ENCODE measurements at regions of chr12 and their contacts with region 1.

Region 1: DNA sequence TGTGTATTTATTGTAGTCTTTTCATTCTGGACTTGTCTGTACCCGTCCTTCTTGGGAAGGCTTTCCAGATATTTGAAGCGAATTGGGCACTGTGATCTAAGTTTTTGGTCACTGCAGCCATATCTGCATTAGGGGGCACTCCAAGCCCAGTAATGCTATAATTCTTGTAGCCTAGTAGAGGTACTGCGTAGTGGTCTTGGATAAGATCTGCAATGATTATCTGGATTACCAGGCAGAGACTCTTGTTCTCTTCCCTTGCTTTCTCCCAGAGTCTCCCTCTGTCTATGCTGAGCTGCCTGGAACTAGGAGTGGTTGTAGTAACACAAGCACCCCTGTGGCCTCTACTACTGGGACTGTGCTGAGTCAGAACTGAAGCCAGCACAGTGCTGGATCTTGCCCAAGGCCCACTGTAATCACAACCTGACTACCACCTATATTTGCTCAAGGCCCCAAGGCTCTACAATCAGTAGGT is 30.0 kb downstream of the SLC38A2 start:
- DNase-seq: no peak
- ATAC-seq: peak; percentile 98
- H3K4me3 ChIP-seq: no peak overlapping the region
- H3K27ac ChIP-seq: no peak overlapping the region
- H3K4me1 ChIP-seq: no peaks in the 10 kb centered on the region
- H3K27me3 ChIP-seq: no peaks in the 10 kb centered on the region
- CTCF ChIP-seq: peak; percentile 43 to 59 (median 45); a peak in 5 of 6 replicates
- EP300 ChIP-seq: no peak
- POLR2A ChIP-seq: no peak
- RAD21 ChIP-seq: peak; percentile 68

Region 2: DNA sequence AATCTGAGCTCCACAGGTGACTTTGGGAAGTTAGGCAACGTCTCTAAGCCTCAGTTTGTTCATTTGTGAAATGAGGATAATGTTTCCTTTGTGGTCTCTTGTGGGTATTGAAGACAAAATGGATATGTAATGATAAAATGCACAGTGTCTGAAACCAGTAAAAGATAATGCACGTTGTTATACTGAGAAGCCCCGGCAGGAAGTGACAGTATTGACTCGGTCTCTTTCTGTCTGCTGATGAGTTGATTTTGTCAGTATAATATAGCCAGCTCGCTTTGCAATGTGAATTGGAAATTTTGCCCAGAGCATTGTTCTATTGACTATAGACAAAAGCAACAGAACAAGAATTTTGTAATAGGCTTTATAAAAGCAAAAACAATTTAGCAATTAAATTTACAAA is 24.6 kb before region 1 on chr12:
- CTCF ChIA-PET with region 1: no interaction called
- POLR2A ChIA-PET with region 1: no interaction called
- RAD21 ChIA-PET with region 1: no interaction called
- SMC1A ChIA-PET with region 1: no interaction called
- in situ Hi-C with region 1: no loop called
- intact Hi-C with region 1: no loop called
- DNase-seq: no peak
- ATAC-seq: no peak
- H3K4me3 ChIP-seq: no peak overlapping the region
- H3K27ac ChIP-seq: no peak overlapping the region
- H3K4me1 ChIP-seq: no peaks in the 10 kb centered on the region
- H3K27me3 ChIP-seq: no peaks in the 10 kb centered on the region
- CTCF ChIP-seq: no peak
- EP300 ChIP-seq: no peak
- POLR2A ChIP-seq: no peak
- RAD21 ChIP-seq: no peak

Region 3: GRCh38 chr12:46675736-46676135 is 333.1 kb after region 1 on chr12:
- CTCF ChIA-PET with region 1: interaction called, 16 read pairs
- POLR2A ChIA-PET with region 1: no interaction called
- RAD21 ChIA-PET with region 1: no interaction called
- SMC1A ChIA-PET with region 1: interaction called, 3 read pairs
- in situ Hi-C with region 1: no loop called
- intact Hi-C with region 1: loop called (anchors 5 kb)
- DNase-seq: no peak
- ATAC-seq: 0 out of 3 replicates have a peak, but pooled peaks have one; percentile 29
- H3K4me3 ChIP-seq: no peak overlapping the region
- H3K27ac ChIP-seq: no peak overlapping the region
- H3K4me1 ChIP-seq: no peaks in the 10 kb centered on the region
- H3K27me3 ChIP-seq: no peaks in the 10 kb centered on the region
- CTCF ChIP-seq: peak; percentile 35 to 39 (median 35); a peak in 4 of 6 replicates
- EP300 ChIP-seq: no peak
- POLR2A ChIP-seq: no peak
- RAD21 ChIP-seq: peak; percentile 62

Region 4: DNA sequence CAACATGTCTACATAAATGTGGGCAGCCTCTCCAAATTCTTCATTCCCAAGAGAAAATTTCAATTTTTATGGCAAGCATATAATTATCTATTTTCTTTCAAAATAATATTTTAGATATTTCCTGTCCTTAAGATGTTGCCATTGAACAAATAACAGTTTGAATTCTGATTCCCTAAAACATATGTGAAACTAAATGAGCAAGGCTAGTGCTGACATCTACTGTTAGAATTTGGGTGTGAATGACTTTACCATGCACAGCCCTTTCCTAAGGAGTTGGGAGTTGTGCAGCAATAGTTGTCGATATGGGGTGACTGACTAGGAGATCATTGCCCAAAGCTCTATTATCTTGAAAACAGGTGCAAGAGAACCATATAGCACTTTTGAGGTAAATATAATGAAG is 591.3 kb after region 1 on chr12:
- CTCF ChIA-PET with region 1: no interaction called
- POLR2A ChIA-PET with region 1: no interaction called
- RAD21 ChIA-PET with region 1: no interaction called
- SMC1A ChIA-PET with region 1: no interaction called
- in situ Hi-C with region 1: no loop called
- intact Hi-C with region 1: loop called (anchors 2 kb)
- DNase-seq: no peak
- ATAC-seq: peak; percentile 70
- H3K4me3 ChIP-seq: no peak overlapping the region
- H3K27ac ChIP-seq: no peak overlapping the region
- H3K4me1 ChIP-seq: no peaks in the 10 kb centered on the region
- H3K27me3 ChIP-seq: no peaks in the 10 kb centered on the region
- CTCF ChIP-seq: peak; percentile 23 to 56 (median 51); a peak in 5 of 6 replicates
- EP300 ChIP-seq: no peak
- POLR2A ChIP-seq: no peak
- RAD21 ChIP-seq: peak; percentile 84

Region 5: GRCh38 chr12:46983393-46984266 is 641.0 kb after region 1 on chr12:
- CTCF ChIA-PET with region 1: interaction called, 4 read pairs
- POLR2A ChIA-PET with region 1: no interaction called
- RAD21 ChIA-PET with region 1: no interaction called
- SMC1A ChIA-PET with region 1: no interaction called
- in situ Hi-C with region 1: loop called (anchors 10 kb)
- intact Hi-C with region 1: loop called (anchors 10 kb)
- DNase-seq: peak; percentile 2
- ATAC-seq: peak; percentile 92
- H3K4me3 ChIP-seq: no peak overlapping the region
- H3K27ac ChIP-seq: no peak overlapping the region
- H3K4me1 ChIP-seq: no peaks in the 10 kb centered on the region
- H3K27me3 ChIP-seq: no peaks in the 10 kb centered on the region
- CTCF ChIP-seq: peak; percentile 76 to 80 (median 77)
- EP300 ChIP-seq: no peak
- POLR2A ChIP-seq: no peak
- RAD21 ChIP-seq: peak; percentile 89

Region 6: DNA sequence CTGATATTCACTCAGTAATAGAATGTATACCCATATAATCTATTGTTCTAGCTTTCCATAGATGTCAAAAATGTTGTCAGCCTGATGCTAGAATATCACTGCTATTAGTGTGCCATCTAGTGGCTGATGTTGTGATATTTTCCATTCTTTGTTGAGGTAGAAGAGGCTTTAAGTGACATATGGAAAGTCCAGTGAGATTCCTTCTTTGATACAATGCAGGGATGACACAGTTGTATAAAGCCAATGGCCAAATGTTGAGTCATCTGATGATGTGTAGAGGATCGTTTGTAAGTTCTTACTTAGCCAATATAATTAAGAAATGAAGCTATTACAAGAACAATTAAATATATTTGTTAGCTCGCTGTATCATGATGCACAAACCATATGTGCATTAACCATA is 678.7 kb after region 1 on chr12:
- CTCF ChIA-PET with region 1: interaction called, 5 read pairs
- POLR2A ChIA-PET with region 1: no interaction called
- RAD21 ChIA-PET with region 1: interaction called, 6 read pairs
- SMC1A ChIA-PET with region 1: interaction called, 4 read pairs
- in situ Hi-C with region 1: loop called (anchors 10 kb)
- intact Hi-C with region 1: loop called (anchors 1 kb)
- DNase-seq: peak; percentile 11
- ATAC-seq: peak; percentile 78
- H3K4me3 ChIP-seq: no peak overlapping the region
- H3K27ac ChIP-seq: no peak overlapping the region
- H3K4me1 ChIP-seq: no peaks in the 10 kb centered on the region
- H3K27me3 ChIP-seq: no peaks in the 10 kb centered on the region
- CTCF ChIP-seq: peak; percentile 50 to 68 (median 66)
- EP300 ChIP-seq: no peak
- POLR2A ChIP-seq: no peak
- RAD21 ChIP-seq: peak; percentile 80

Measured in GM12878 (cell line).